Dendritic cell treated with granulocyte-macrophage colony-stimulating factor and Interleukin-4, amounts not matched to agents 40 ng/mL and 50 ng/mL, for 4 days (primary cell): ENCODE measurements at regions of chr2 and their contacts with region 1.

Region 1: DNA sequence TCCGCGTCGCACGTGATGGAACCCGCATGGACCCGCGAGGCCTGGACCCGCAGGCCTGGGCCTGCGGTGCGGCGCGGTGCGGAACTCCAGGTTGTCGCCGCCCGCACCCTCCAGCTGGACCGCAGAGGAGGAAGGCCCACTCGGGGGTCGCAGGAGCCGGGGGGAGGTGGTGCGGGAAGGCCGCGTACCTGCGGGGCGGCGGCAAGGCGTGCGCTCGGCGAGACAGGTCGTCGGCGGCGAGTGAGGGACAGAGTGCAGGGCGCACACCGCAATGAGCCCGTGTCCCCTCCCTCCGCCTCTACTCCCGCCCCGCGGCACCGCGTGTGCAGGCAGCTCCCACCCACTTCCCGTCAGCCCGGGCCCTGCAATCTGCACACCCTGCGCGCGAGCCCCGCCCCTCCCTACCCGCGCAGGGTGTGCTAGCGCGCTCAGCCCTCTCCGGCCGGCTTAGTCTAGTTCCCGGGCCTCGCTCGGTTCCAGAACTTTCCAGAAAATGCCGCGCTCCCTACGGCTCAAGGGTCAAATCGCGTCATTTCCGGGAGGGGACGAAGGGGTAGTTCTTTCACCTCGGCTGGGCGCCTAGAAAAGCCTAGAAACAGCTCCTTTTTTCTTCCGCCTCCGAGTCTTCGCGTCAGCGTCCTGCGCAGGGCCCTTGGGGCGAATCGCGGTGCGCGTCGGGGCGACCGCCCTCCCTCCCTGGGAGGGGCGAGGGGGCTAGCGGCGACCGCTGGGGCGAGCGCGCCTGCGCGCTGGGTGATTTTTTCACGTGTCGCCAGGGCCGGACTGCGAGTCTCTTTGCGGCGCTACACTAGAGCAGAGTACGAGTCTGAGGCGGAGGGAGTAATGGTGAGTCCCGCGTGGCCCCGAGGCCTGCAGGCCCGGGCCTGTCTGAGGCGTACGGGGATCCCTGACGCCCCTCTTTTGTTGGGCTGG is at the starts of genes HSPD1 and HSPE1:
- H3K4me3 Mint-ChIP-seq: peak within 1 kb of the TSS; percentile 83
- H3K27ac Mint-ChIP-seq: peak within 1 kb of the TSS; percentile 94
- H3K4me1 Mint-ChIP-seq: peaks cover 36% of the 10 kb centered on the region
- H3K27me3 Mint-ChIP-seq: no peaks in the 10 kb centered on the region

Region 2: DNA sequence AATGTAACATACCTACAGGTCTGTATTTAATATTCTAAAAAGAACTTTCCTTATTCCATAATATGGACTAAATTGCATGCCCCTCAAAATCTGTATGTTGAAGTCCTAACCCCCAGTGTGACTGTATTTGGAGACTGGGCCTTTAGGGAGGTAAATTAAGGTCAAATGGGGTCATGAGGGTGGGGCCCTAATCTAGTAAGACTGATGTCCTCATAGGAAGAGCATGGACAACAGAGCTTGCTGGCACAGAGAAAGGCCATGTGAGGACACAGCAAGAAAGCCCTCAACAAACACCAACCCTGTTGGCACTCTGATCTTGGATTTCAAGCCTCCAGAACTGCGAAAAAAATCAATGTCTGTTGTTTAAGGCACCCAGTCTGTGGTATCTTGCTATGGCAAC is 83.6 kb before region 1 on chr2:
- intact Hi-C with region 1: loop called (anchors 5 kb)
- H3K4me3 Mint-ChIP-seq: no peak overlapping the region
- H3K27ac Mint-ChIP-seq: no peak overlapping the region
- H3K4me1 Mint-ChIP-seq: no peaks in the 10 kb centered on the region
- H3K27me3 Mint-ChIP-seq: no peaks in the 10 kb centered on the region

Region 3: GRCh38 chr2:197434541-197435513 is 65.0 kb before region 1 on chr2 and contains the start of gene SF3B1:
- intact Hi-C with region 1: loop called (anchors 1 kb)
- H3K4me3 Mint-ChIP-seq: peak within 1 kb of the TSS; percentile 96
- H3K27ac Mint-ChIP-seq: peak within 1 kb of the TSS; percentile 99
- H3K4me1 Mint-ChIP-seq: peaks cover 42% of the 10 kb centered on the region
- H3K27me3 Mint-ChIP-seq: no peaks in the 10 kb centered on the region

Region 4: DNA sequence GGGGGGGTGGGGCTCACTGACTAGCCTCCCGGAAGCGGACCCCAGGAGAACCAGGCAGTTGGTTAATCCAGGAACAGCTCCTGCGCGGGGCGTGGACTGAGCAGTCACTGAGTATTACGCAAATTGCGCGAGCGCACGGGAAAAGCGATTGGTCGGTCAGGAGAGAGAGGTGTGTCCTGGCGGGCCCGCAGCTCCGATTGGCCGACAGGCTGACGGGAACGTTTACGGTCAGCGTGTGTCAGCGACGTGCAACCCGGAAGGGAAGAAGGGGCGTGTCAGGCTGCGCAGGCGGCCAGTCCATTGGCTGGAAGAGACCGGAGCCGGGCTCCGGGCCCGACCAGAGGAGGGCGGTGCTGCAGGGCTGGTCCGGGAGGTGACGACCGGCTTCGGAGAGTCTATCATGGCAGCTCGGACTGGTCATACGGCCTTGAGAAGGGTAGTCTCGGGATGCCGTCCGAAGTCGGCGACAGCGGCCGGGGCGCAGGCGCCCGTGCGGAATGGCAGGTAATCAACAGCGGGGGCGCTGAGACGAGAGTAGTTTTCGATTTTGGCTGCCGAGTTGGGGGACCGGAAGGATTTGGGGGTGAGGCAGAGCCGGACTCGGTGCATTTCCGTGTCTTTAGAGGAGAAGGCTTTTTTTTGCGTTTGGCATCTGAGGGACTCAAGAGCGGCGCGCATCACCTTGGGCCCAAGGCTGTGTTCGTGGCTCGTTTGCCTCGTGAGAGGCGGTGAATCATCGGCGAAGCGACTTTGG is 46.5 kb before region 1 on chr2 and contains the start of gene COQ10B:
- intact Hi-C with region 1: loop called (anchors 1 kb)
- H3K4me3 Mint-ChIP-seq: peak within 1 kb of the TSS; percentile 96
- H3K27ac Mint-ChIP-seq: peak within 1 kb of the TSS; percentile 96
- H3K4me1 Mint-ChIP-seq: peaks cover 41% of the 10 kb centered on the region
- H3K27me3 Mint-ChIP-seq: no peaks in the 10 kb centered on the region

Region 5: GRCh38 chr2:197515739-197516392 is 16.0 kb after region 1 on chr2 and contains the start of gene MOB4:
- intact Hi-C with region 1: loop called (anchors 1 kb)
- H3K4me3 Mint-ChIP-seq: peak within 1 kb of the TSS; percentile 97
- H3K27ac Mint-ChIP-seq: peak within 1 kb of the TSS; percentile 94
- H3K4me1 Mint-ChIP-seq: peaks cover 19% of the 10 kb centered on the region
- H3K27me3 Mint-ChIP-seq: no peaks in the 10 kb centered on the region

Region 6: GRCh38 chr2:197777823-197778407 is 278.1 kb after region 1 on chr2:
- intact Hi-C with region 1: loop called (anchors 5 kb)
- H3K4me3 Mint-ChIP-seq: no peak overlapping the region
- H3K27ac Mint-ChIP-seq: no peak overlapping the region
- H3K4me1 Mint-ChIP-seq: peaks cover 6% of the 10 kb centered on the region
- H3K27me3 Mint-ChIP-seq: no peaks in the 10 kb centered on the region

Region 7: DNA sequence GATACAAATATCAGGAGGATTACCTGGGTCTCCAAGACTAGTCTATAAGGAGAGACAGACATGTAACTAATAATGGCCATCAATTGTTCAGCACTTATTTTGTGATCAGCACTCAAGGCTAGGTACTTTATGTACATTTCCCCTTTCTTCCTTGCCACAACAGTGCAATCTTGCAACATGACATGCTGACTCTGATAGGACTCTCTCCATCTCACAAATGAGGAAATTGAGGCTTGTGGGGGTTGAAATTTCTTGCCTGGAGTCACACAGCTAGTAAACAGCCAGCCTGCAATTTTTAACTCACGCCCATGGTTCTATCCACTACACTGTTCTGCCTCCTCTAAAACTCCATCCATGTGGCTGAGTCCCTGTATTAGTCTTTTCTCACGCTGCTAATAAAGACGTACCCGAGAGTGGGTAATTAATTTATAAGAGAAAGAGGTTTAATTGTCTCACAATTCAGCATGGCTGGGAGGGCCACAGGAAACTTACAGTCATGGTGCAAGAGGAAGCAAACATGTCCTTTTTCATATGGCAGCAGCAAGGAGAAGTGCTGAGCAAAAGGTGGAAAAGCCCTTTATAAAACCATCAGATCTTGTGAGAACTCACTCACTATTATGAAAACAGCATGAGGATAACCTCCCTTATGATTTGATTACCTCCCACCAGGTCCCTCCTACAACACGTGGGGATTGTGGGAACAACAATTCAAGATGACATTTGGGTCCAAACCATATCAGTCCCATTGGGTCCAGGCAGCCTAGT is 606.9 kb after region 1 on chr2:
- intact Hi-C with region 1: loop called (anchors 5 kb)
- H3K4me3 Mint-ChIP-seq: no peak overlapping the region
- H3K27ac Mint-ChIP-seq: peak overlapping the region; percentile 86
- H3K4me1 Mint-ChIP-seq: peaks cover 41% of the 10 kb centered on the region
- H3K27me3 Mint-ChIP-seq: no peaks in the 10 kb centered on the region